Natural killer cell (primary cell): ENCODE measurements at regions of chr7 and their contacts with region 1.

Region 1: DNA sequence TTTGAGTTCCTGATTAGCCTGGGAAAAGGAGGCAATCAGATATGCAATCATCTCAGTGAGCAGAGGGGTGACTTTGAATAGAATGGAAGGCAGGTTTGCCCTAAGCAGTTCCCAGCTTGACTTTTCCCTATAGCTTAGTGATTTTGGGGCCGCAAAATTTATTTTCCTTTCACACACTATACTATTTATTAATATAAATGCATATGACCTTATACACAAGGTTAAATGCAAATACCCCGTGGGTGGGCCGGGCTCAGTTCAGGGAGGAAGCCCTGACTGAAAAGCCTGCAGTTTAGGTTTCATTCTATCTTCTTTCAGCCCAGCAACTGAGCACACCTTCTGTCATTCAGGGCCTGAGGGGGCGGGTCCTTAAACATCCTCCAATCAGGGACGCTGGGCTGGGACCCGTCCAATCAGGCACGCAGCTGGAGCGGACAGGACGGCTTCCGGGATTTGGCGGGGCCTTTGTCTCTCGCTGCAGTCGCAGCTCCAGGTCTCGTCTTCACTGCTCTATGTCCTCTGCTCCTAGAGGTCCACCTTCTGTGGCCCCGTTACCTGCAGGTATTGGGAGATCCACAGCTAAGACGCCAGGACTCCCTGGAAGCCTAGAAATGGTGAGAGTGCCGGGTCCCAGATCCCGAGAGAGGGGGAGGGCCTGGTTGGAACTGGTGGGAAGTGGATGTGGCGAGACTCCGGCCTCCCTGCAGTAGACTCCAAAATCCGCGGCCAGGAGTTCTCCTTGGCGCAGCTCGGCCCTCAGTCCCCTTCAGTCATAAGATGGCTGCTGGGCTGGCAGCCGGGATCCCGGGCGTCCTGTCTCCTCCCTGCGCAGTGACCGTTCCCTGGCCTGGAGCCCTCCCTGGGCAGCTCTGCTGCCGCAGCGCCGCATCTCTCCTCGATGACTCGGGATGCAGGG is at the start of gene ZNF273:
- DNase-seq: peak; percentile 92 to 94
- ATAC-seq: peak; percentile 98 to 100 (median 99)
- H3K4me3 ChIP-seq: peak within 1 kb of the TSS; percentile 67
- H3K4me3 Mint-ChIP-seq: peak within 1 kb of the TSS; percentile 97
- H3K27ac ChIP-seq: peak within 1 kb of the TSS; percentile 43
- H3K27ac Mint-ChIP-seq: peak within 1 kb of the TSS; percentile 87 to 94
- H3K4me1 ChIP-seq: peaks cover 12% of the 10 kb centered on the region
- H3K4me1 Mint-ChIP-seq: peaks cover 42 to 48% of the 10 kb centered on the region in 2 donors
- H3K27me3 ChIP-seq: no peaks in the 10 kb centered on the region
- H3K27me3 Mint-ChIP-seq: no peaks in the 10 kb centered on the region
- CTCF ChIP-seq: no peak
- total RNA-seq, gene ZNF273: 2.9 to 4.2 (median 4.0) TPM

Region 2: GRCh38 chr7:63900394-63901203 is 1002.5 kb before region 1 on chr7:
- intact Hi-C with region 1: loop called (anchors 1 kb)
- DNase-seq: peak; percentile 86 to 93
- ATAC-seq: peak; percentile 46 to 96 (median 93)
- H3K4me3 ChIP-seq: peak overlapping the region; percentile 82
- H3K4me3 Mint-ChIP-seq: peak overlapping the region; percentile 95
- H3K27ac ChIP-seq: peak overlapping the region; percentile 81
- H3K27ac Mint-ChIP-seq: peak overlapping the region; percentile 84 to 87
- H3K4me1 ChIP-seq: peaks cover 19% of the 10 kb centered on the region
- H3K4me1 Mint-ChIP-seq: peaks cover 0 to 27% of the 10 kb centered on the region in 2 donors
- H3K27me3 ChIP-seq: no peaks in the 10 kb centered on the region
- H3K27me3 Mint-ChIP-seq: no peaks in the 10 kb centered on the region
- CTCF ChIP-seq: no peak

Region 3: DNA sequence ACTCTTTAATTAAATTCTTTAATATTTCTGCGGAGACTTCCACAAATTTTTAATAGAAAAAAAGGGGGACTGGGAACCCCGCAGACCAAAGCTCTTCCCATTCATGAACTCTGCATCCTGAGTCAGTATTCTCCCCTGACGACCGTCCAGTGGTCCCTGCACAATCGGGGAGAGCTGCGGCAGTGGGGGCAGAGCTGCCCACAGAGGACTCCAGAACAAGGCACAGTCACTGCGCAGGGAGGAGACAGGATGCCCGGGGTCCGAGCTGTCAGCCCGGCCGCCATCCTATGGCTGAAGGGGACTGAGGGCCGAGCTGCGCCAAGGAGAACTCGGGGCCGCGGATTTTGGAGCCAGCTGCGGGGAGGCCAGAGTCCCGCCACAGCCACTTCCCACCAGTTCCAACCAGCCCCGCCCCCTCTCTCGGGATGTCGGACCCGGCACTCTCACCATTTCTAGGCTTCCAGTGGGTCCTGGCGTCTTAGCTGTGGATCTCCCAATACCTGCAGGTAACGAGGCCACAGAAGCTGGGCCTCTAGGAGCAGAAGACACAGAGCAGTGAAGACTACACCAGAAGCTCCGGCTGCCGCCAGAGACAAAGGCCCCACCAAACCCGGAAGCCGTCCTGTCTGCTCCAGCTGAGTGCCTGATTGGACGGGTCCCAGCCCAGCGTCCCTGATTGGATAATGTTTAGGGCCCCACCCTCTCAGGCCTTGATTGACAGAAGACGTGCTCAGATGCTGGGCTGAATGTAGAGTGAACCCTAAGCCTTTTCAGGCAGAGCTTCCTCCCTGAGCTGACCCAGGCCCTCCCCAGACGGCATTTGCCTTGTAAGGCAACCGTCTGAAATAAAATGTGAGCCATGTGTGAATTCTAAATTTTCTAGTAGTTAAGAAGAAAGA is 103.3 kb after region 1 on chr7 and contains the start of gene ERV3-1:
- intact Hi-C with region 1: loop called (anchors 1 kb)
- DNase-seq: peak; percentile 90 to 95
- ATAC-seq: peak; percentile 98 to 99 (median 99)
- H3K4me3 ChIP-seq: peak within 1 kb of the TSS; percentile 85
- H3K4me3 Mint-ChIP-seq: peak within 1 kb of the TSS; percentile 95
- H3K27ac ChIP-seq: peak within 1 kb of the TSS; percentile 82
- H3K27ac Mint-ChIP-seq: peak within 1 kb of the TSS; percentile 93 to 96
- H3K4me1 ChIP-seq: peaks cover 13% of the 10 kb centered on the region
- H3K4me1 Mint-ChIP-seq: peaks cover 51 to 57% of the 10 kb centered on the region in 2 donors
- H3K27me3 ChIP-seq: no peaks in the 10 kb centered on the region
- H3K27me3 Mint-ChIP-seq: no peaks in the 10 kb centered on the region
- CTCF ChIP-seq: no peak
- total RNA-seq, gene ERV3-1: 26.3 to 35.1 (median 34.2) TPM